GM12878 (cell line): ENCODE measurements at regions of chr20 and their contacts with region 1.

Region 1: DNA sequence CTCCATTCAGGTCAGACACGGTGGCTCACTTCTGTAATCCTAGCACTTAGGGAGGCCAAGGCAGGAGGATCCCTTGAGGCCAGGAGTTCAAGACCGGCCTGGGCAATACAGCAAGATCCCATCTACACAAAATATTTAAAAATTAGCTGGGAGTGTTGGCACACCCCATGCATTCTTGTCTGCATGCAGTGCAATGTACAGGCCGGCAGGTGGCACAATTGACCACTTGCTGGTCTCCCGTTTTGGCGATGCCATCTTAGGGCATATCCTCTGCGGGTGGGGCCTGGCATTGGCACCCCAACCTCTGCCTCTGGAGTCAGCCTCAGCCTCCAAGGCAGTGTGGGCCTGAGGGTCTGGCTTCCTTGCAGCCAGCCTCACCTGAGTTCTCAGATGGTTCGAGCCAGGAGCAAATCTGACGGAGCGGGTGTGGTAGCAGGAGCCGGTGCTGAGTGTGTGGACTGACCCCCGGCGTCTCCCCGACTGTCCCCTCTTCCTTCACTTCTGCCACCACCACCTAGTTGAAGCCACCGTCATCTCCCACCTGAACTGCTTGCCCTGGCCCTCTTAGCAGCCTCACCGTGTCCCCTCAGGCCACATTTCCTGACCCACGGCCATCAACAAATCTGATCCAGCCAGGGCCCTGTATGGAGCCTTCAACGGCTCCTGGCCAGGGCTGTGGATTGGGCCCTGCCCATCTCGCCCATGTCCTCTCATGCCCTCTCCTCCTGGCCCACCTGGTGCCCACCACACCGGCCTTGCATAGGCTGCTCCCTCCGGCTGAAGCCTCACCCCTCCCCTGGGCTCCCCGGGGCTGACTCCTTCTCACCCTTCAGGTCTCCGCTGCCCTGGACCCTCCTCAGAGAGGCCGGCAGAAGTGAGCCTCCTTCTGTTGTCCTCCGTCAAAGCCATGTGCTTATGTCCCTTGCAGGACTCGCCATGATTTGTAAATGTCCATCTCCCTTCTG is 44.0 kb downstream of the EFCAB8 start:
- DNase-seq: no peak
- ATAC-seq: peak; percentile 94
- H3K4me3 ChIP-seq: no peak overlapping the region
- H3K27ac ChIP-seq: no peak overlapping the region
- H3K4me1 ChIP-seq: no peaks in the 10 kb centered on the region
- H3K27me3 ChIP-seq: no peaks in the 10 kb centered on the region
- CTCF ChIP-seq: peak; percentile 89 to 96 (median 93)
- EP300 ChIP-seq: no peak
- POLR2A ChIP-seq: no peak
- RAD21 ChIP-seq: peak; percentile 91

Region 2: DNA sequence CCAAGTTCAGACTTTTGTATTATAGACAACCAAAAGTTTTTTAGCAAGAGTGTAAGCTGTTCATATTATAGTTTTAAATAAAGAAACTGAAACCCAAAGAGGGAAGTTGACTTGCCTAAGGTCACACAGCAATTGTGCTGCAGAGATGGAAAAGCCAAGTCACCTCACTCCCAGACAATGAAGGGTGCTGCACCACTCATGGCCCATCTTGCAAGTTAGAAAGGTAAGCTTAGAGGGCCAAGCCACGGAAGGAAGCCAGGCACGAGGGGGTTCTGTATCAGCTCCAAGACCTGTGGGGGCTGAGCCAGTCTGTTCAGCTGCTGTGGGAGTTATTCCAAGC is 1428.7 kb before region 1 on chr20:
- CTCF ChIA-PET with region 1: no interaction called
- POLR2A ChIA-PET with region 1: no interaction called
- RAD21 ChIA-PET with region 1: no interaction called
- SMC1A ChIA-PET with region 1: no interaction called
- in situ Hi-C with region 1: no loop called
- intact Hi-C with region 1: no loop called
- DNase-seq: no peak
- ATAC-seq: peak; percentile 84
- H3K4me3 ChIP-seq: no peak overlapping the region
- H3K27ac ChIP-seq: no peak overlapping the region
- H3K4me1 ChIP-seq: peaks cover 4% of the 10 kb centered on the region
- H3K27me3 ChIP-seq: peaks cover 10 to 13% of the 10 kb centered on the region in 2 experiments
- CTCF ChIP-seq: no peak
- EP300 ChIP-seq: no peak
- POLR2A ChIP-seq: no peak
- RAD21 ChIP-seq: no peak

Region 3: GRCh38 chr20:32930181-32930580 is 27.4 kb after region 1 on chr20:
- CTCF ChIA-PET with region 1: no interaction called
- POLR2A ChIA-PET with region 1: no interaction called
- RAD21 ChIA-PET with region 1: no interaction called
- SMC1A ChIA-PET with region 1: no interaction called
- in situ Hi-C with region 1: no loop called
- intact Hi-C with region 1: no loop called
- DNase-seq: no peak
- ATAC-seq: no peak
- H3K4me3 ChIP-seq: no peak overlapping the region
- H3K27ac ChIP-seq: no peak overlapping the region
- H3K4me1 ChIP-seq: no peaks in the 10 kb centered on the region
- H3K27me3 ChIP-seq: peaks cover 0 to 2% of the 10 kb centered on the region in 2 experiments; a peak in 3 of 4 replicates
- CTCF ChIP-seq: no peak
- EP300 ChIP-seq: no peak
- POLR2A ChIP-seq: no peak
- RAD21 ChIP-seq: no peak

Region 4: GRCh38 chr20:32945710-32946221 is 43.0 kb after region 1 on chr20:
- CTCF ChIA-PET with region 1: interaction called, 24 read pairs
- POLR2A ChIA-PET with region 1: no interaction called
- RAD21 ChIA-PET with region 1: no interaction called
- SMC1A ChIA-PET with region 1: interaction called, 4 read pairs
- in situ Hi-C with region 1: no loop called
- intact Hi-C with region 1: loop called (anchors 1 kb)
- DNase-seq: no peak
- ATAC-seq: peak; percentile 82
- H3K4me3 ChIP-seq: no peak overlapping the region
- H3K27ac ChIP-seq: no peak overlapping the region
- H3K4me1 ChIP-seq: no peaks in the 10 kb centered on the region
- H3K27me3 ChIP-seq: no peaks in the 10 kb centered on the region
- CTCF ChIP-seq: peak; percentile 41 to 61 (median 46)
- EP300 ChIP-seq: no peak
- POLR2A ChIP-seq: no peak
- RAD21 ChIP-seq: peak; percentile 19; the same call in 1 of the 2 replicates

Region 5: GRCh38 chr20:33005132-33005566 is 102.4 kb after region 1 on chr20:
- CTCF ChIA-PET with region 1: interaction called, 10 read pairs
- POLR2A ChIA-PET with region 1: no interaction called
- RAD21 ChIA-PET with region 1: interaction called, 4 read pairs
- SMC1A ChIA-PET with region 1: interaction called, 3 read pairs
- in situ Hi-C with region 1: no loop called
- intact Hi-C with region 1: loop called (anchors 1 kb)
- DNase-seq: no peak
- ATAC-seq: no peak
- H3K4me3 ChIP-seq: no peak overlapping the region
- H3K27ac ChIP-seq: no peak overlapping the region
- H3K4me1 ChIP-seq: no peaks in the 10 kb centered on the region
- H3K27me3 ChIP-seq: no peaks in the 10 kb centered on the region
- CTCF ChIP-seq: peak in 2 of 3 experiments; percentile 32 to 65; a peak in 3 of 6 replicates
- EP300 ChIP-seq: no peak
- POLR2A ChIP-seq: no peak
- RAD21 ChIP-seq: peak; percentile 47

Region 6: DNA sequence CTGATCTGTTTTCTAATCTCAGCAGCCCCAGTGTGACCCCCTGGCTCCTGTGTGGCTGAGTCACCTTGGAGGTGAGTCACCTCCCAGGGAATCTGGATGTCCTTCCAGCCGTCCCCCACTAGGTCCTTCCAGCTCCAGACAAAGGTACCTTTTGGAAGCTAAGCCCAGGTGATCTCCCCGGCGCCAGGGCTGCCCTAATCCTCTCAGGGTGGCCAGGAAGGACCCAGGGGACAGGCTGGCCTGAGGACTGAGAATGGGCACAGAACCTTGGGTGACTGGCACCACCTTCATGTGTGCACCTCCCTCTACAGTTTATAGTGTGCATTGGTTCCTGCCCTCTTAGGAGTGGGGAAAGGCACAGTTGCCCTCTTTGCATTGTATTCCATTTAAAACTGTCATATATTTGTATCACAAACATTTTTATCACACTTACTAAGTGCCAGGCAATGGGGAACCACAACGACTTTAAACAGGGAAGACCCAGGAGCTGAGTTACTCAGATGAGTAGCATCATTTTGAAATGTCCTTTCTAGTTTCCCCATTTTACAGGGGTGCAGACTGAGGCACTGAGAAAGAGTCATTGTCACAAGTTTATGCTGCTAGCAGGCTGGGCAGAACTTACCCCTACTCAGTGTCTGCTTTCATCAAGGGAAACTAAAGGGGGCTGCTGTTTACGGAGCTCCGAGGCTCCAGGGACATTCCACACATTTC is 174.1 kb after region 1 on chr20:
- CTCF ChIA-PET with region 1: interaction called, 9 read pairs
- POLR2A ChIA-PET with region 1: no interaction called
- RAD21 ChIA-PET with region 1: interaction called, 4 read pairs
- SMC1A ChIA-PET with region 1: no interaction called
- in situ Hi-C with region 1: no loop called
- intact Hi-C with region 1: loop called (anchors 5 kb)
- DNase-seq: no peak
- ATAC-seq: peak; percentile 74
- H3K4me3 ChIP-seq: no peak overlapping the region
- H3K27ac ChIP-seq: no peak overlapping the region
- H3K4me1 ChIP-seq: no peaks in the 10 kb centered on the region
- H3K27me3 ChIP-seq: peaks cover 0 to 1% of the 10 kb centered on the region in 2 experiments; a peak in 1 of 4 replicates
- CTCF ChIP-seq: peak; percentile 44 to 55 (median 52); a peak in 5 of 6 replicates
- EP300 ChIP-seq: no peak
- POLR2A ChIP-seq: no peak
- RAD21 ChIP-seq: peak; percentile 38

Region 7: GRCh38 chr20:33097001-33097400 is 194.3 kb after region 1 on chr20:
- CTCF ChIA-PET with region 1: interaction called, 13 read pairs
- POLR2A ChIA-PET with region 1: no interaction called
- RAD21 ChIA-PET with region 1: interaction called, 4 read pairs
- SMC1A ChIA-PET with region 1: interaction called, 7 read pairs
- in situ Hi-C with region 1: loop called (anchors 5 kb)
- intact Hi-C with region 1: loop called (anchors 1 kb)
- DNase-seq: no peak
- ATAC-seq: no peak
- H3K4me3 ChIP-seq: no peak overlapping the region
- H3K27ac ChIP-seq: no peak overlapping the region
- H3K4me1 ChIP-seq: no peaks in the 10 kb centered on the region
- H3K27me3 ChIP-seq: no peaks in the 10 kb centered on the region
- CTCF ChIP-seq: no peak
- EP300 ChIP-seq: no peak
- POLR2A ChIP-seq: no peak
- RAD21 ChIP-seq: no peak

Region 8: DNA sequence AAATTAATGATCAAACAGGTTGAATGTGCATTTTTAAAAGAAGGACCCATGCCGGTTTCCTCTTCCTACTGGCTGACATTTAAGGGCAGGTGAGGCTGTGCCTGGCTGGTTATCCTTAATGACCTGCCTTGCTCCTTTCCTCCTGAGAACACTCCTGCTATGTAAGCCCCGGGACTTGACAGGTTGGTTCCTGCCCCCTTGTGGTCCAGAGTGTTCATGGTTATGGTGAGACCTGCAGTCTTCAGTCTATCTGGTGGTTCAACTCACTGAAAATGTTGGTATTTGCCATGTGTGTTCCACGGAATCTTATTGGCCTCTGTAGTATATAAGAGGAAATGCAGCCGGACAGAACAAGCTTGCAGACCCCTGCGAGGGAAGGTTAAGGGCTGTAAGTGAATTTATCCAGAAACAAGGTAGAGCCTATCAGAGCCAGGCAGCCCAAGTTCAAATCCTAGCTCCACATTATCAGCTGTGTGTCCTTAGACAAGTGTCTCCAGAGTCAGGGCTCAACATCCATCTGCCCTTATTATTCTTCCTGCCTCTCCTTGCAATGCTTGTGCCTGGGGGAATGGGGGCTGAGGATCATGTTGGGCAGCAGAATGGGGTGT is 309.2 kb after region 1 on chr20:
- CTCF ChIA-PET with region 1: no interaction called
- POLR2A ChIA-PET with region 1: no interaction called
- RAD21 ChIA-PET with region 1: interaction called, 5 read pairs
- SMC1A ChIA-PET with region 1: no interaction called
- in situ Hi-C with region 1: no loop called
- intact Hi-C with region 1: loop called (anchors 5 kb)
- DNase-seq: no peak
- ATAC-seq: peak; percentile 72
- H3K4me3 ChIP-seq: no peak overlapping the region
- H3K27ac ChIP-seq: no peak overlapping the region
- H3K4me1 ChIP-seq: no peaks in the 10 kb centered on the region
- H3K27me3 ChIP-seq: peaks cover 0 to under 1% of the 10 kb centered on the region in 2 experiments; a peak in 2 of 4 replicates
- CTCF ChIP-seq: peak; percentile 54 to 58 (median 55)
- EP300 ChIP-seq: no peak
- POLR2A ChIP-seq: no peak
- RAD21 ChIP-seq: peak; percentile 62

Region 9: DNA sequence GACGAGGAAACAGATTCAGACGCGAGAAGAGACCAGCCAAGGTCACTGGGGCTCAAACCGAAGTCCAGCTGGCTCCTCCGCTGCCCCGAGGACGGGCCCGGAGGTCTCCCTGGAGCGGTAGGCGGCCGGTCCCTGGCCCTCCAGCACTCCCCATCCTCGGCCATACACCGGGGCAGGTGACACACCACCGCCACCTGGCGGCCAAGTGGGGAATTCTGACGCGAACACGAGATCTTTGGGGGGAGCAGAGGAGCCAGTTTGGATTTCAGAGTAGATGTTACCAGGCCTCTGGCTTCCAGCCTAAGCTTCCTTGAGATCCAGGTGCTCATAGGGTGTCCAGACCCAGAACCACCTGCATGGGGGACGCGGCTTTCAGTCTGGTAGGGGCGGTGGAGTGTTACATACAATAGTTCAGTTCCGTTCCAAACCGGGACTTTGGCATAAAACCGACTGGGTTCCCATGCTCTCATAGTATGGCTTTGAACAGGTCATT is 396.4 kb after region 1 on chr20:
- CTCF ChIA-PET with region 1: interaction called, 7 read pairs
- POLR2A ChIA-PET with region 1: no interaction called
- RAD21 ChIA-PET with region 1: interaction called, 6 read pairs
- SMC1A ChIA-PET with region 1: no interaction called
- in situ Hi-C with region 1: no loop called
- intact Hi-C with region 1: loop called (anchors 2 kb)
- DNase-seq: no peak
- ATAC-seq: peak; percentile 97
- H3K4me3 ChIP-seq: no peak overlapping the region
- H3K27ac ChIP-seq: no peak overlapping the region
- H3K4me1 ChIP-seq: no peaks in the 10 kb centered on the region
- H3K27me3 ChIP-seq: peaks cover 0 to 2% of the 10 kb centered on the region in 2 experiments; a peak in 2 of 4 replicates
- CTCF ChIP-seq: peak; percentile 85 to 94 (median 91)
- EP300 ChIP-seq: no peak
- POLR2A ChIP-seq: no peak
- RAD21 ChIP-seq: peak; percentile 64